ENCODE measurements at regions of chr5 and their contacts with region 1.

Region 1: DNA sequence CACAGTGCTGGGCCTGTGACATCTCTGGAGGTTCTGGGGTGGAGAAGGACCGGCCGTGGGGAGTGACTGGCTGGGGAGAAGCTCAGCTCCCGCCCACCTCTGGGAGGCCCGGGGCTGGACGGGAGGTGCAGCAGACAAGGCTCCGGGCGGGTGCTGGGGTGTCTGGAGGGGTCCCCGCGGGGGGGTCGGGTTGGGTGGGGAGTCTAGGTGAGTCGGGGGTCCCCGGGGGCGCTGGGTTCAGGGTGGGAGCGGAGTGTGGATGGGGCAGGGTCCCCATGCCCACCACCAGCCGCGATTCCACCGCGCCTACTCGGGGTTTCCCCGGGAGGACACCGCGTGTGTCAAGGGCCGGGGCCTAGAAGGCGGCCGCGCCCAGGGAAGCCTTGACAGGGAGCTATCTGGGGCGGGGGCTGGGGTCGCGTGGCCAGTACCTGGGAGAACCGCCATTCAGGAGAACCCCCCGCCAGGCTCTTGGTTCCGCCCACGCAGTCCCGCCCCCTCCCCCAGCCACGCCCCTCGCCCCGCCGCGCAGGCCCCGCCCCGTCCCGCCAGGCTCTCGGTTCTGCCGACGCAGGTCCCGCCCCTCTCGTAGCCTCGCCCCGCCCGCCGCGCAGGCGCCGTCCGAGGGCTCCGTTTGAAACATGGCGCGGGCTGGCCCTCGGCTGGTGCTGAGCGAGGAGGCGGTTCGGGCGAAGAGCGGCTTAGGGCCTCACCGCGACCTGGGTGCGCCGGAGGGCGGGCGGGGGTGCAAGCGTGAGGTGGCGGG is at the start of gene CEP72:
- DNase-seq: peak; percentile 91
- H3K4me3 Mint-ChIP-seq: peak within 1 kb of the TSS; percentile 91
- H3K27ac Mint-ChIP-seq: peak within 1 kb of the TSS; percentile 98
- H3K4me1 Mint-ChIP-seq: peaks cover 41% of the 10 kb centered on the region
- H3K27me3 Mint-ChIP-seq: peaks cover 17% of the 10 kb centered on the region
- CTCF ChIP-seq: no peak
- total RNA-seq, gene CEP72: 53.7 and 56.5 TPM in 2 replicates

Region 2: GRCh38 chr5:30131-30530 is 581.8 kb before region 1 on chr5:
- CTCF ChIA-PET with region 1: no interaction called
- intact Hi-C with region 1: no loop called
- DNase-seq: no peak
- H3K4me3 Mint-ChIP-seq: no peak overlapping the region
- H3K27ac Mint-ChIP-seq: no peak overlapping the region
- H3K4me1 Mint-ChIP-seq: no peaks in the 10 kb centered on the region
- H3K27me3 Mint-ChIP-seq: peaks cover 64% of the 10 kb centered on the region
- CTCF ChIP-seq: no peak

Region 3: DNA sequence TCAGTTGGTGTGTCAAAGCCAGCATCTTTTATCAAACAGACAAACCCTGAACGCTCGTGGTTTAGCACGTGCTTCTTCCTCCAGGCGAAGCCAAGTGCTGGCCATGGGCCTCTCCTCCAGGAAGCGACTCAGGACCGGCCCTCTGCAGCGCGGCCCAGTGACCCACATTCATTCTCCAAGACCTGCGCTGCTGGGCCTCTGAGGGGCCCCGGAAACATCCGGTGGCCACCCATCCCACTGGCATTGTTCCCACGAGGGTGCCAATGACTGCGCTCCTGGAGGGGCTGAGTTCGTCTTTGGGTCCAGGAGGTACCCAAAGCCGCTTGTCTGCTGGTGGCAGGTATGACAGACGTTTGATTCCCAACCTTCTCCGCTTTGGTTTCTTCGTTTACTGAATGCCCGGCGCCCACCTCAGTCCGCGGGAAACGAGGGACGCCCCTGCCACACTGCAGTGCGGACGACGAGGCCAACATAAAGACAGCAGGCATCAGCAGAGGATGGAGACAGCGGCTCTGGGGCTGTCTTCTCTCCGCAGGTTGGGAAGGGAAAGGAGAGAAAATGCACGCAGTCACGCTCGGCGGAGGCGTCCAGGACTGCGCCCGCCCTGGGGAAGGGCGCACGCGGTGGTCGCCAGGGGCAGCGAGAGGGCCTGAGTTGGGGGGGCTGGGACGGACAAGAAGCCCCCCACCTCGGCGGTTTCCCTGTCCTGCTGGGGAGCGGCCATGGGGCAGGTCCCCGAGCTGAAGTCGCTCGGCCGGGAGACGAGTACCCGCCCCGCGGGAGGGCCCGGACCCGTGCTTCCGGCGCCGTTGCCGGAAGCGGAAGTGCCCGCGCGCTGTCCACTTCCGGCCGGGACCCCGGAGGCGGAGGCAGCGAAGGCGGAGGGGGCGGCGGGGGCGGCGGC is 169.3 kb before region 1 on chr5 and contains the start of gene EXOC3:
- CTCF ChIA-PET with region 1: interaction called, 5 read pairs
- intact Hi-C with region 1: loop called (anchors 10 kb)
- DNase-seq: peak; percentile 81
- H3K4me3 Mint-ChIP-seq: peak within 1 kb of the TSS; percentile 94
- H3K27ac Mint-ChIP-seq: peak within 1 kb of the TSS; percentile 77
- H3K4me1 Mint-ChIP-seq: peaks cover 22% of the 10 kb centered on the region
- H3K27me3 Mint-ChIP-seq: no peaks in the 10 kb centered on the region
- CTCF ChIP-seq: no peak
- total RNA-seq, gene EXOC3: 63.8 and 69.4 TPM in 2 replicates